ENCODE measurements at regions of chr6 and their contacts with region 1.

Region 1: GRCh38 chr6:28001351-28002135 is 44.5 kb downstream of the OR2B6 start:
- DNase-seq: no peak
- H3K4me3 ChIP-seq: no peak overlapping the region
- H3K27ac ChIP-seq: no peak overlapping the region
- H3K4me1 ChIP-seq: no peaks in the 10 kb centered on the region
- H3K27me3 ChIP-seq: no peaks in the 10 kb centered on the region
- CTCF ChIP-seq: no peak

Region 2: DNA sequence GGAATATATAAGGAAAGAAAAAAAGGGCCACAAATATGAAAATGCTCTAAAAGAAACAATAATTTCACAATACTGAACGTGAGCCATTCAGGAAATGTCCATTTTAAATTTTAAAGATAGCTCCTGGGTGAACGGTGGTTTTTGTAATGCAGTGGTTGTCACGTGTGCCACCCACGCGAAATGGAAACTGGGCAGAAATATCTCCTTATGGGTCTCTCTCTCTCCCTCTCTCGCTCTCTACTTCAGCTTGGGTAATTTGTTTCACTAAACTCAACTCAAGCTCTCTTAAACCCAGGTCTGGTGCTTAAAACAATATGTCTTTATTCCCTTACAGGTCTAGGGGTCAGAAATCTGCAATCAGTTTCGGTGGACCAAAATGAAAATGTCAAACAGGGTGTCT is 240.2 kb before region 1 on chr6:
- CTCF ChIA-PET with region 1: no interaction called
- POLR2A ChIA-PET with region 1: no interaction called
- intact Hi-C with region 1: no loop called
- DNase-seq: no peak
- H3K4me3 ChIP-seq: no peak overlapping the region
- H3K27ac ChIP-seq: no peak overlapping the region
- H3K4me1 ChIP-seq: no peaks in the 10 kb centered on the region
- H3K27me3 ChIP-seq: no peaks in the 10 kb centered on the region
- CTCF ChIP-seq: no peak

Region 3: DNA sequence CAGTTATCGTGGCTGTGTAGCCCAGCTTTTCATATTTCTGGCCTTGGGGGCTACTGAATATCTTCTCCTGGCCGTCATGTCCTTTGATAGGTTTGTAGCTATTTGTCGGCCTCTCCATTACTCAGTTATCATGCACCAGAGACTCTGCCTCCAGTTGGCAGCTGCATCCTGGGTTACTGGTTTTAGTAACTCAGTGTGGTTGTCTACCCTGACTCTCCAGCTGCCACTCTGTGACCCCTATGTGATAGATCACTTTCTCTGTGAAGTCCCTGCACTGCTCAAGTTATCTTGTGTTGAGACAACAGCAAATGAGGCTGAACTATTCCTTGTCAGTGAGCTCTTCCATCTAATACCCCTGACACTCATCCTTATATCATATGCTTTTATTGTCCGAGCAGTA is 44.0 kb before region 1 on chr6:
- CTCF ChIA-PET with region 1: no interaction called
- POLR2A ChIA-PET with region 1: no interaction called
- intact Hi-C with region 1: loop called (anchors 1 kb)
- DNase-seq: no peak
- H3K4me3 ChIP-seq: no peak overlapping the region
- H3K27ac ChIP-seq: no peak overlapping the region
- H3K4me1 ChIP-seq: no peaks in the 10 kb centered on the region
- H3K27me3 ChIP-seq: no peaks in the 10 kb centered on the region
- CTCF ChIP-seq: no peak